Breast epithelium (tissue), 4 donors: ENCODE measurements at regions of chr9 and their contacts with region 1.

Region 1: GRCh38 chr9:112664531-112664930 is 53.4 kb downstream of the INIP start:
- DNase-seq: no peak
- H3K4me3 ChIP-seq: no peak overlapping the region
- H3K27ac ChIP-seq: no peak overlapping the region
- H3K4me1 ChIP-seq: no peaks in the 10 kb centered on the region
- H3K27me3 ChIP-seq: no peaks in the 10 kb centered on the region
- CTCF ChIP-seq: no peak
- POLR2A ChIP-seq: no peak

Region 2: DNA sequence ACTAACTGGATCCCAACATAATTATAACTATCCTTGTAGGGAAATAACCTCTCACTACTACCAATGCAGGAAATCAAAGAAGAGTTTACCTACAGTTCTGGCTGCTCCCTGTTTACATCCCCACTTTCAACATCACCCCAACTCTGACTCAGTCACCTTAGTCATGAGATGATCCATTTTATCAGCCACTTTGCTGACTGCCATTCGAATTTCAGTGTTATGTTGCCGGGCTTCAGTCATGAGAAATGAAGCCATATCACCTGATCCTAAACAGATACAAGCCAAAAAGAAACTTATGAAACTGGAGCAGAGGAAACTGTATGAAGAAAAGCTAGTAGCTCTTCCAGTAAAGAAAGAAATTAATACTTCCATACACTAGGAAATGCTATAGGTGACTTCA is 520.0 kb after region 1 on chr9:
- intact Hi-C with region 1: loop called (anchors 5 kb)
- DNase-seq: no peak
- H3K4me3 ChIP-seq: no peak overlapping the region
- H3K27ac ChIP-seq: no peak overlapping the region
- H3K4me1 ChIP-seq: no peaks in the 10 kb centered on the region
- H3K27me3 ChIP-seq: no peaks in the 10 kb centered on the region
- CTCF ChIP-seq: no peak
- POLR2A ChIP-seq: no peak